ENCODE measurements at regions of chr19 and their contacts with region 1.

Region 1: GRCh38 chr19:48795055-48795684 is 15.7 kb downstream of the BCAT2 start:
- DNase-seq: peak; percentile 89 to 93 (median 93)
- H3K4me3 ChIP-seq: peak overlapping the region; percentile 58 to 92 (median 76)
- H3K27ac ChIP-seq: peak overlapping the region in 1 of 2 experiments; percentile 68
- H3K4me1 ChIP-seq: peaks cover 0 to 13% (median 3%) of the 10 kb centered on the region in 4 experiments
- H3K27me3 ChIP-seq: no peaks in the 10 kb centered on the region

Region 2: DNA sequence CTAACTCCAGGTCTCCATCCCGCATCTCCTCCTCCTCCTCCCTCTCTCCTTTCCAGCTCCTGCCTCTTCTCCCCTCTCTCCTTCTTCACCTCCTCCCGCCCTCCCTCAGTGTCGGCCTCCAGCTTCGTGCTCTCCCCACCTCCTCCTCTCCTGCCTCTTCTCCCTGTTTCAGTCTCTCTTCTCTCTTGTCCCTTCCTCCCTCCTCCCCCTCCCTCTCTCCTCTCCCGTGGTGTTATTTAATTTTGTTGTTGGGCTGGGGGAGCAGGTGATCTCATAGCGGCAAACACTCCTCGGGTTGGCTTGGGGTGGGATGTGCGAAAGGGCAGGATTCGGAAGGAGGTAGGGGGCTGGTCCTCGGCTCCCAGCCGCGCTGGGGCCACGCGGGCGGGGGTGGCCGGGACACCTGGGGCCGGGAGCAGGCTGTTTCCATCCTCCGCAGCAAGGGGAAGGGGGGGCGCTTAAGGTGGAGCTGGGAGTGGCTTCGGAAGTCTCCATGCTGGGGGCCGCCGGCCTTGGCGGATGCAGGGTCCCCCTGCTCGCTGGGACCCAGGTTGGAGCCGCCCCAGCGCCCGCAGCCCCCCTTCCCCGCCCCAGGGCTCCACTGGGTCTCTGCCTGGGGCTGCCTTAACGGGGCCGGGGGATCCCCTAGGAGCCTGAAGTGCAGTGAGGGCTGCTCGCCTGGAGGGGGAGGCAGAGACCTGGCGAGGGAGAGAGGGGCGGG is 149.0 kb before region 1 on chr19 and contains the start of gene CA11:
- CTCF ChIA-PET with region 1: interaction called, 12 read pairs
- POLR2A ChIA-PET with region 1: interaction called, 3 read pairs
- DNase-seq: peak; percentile 87 to 94 (median 94)
- H3K4me3 ChIP-seq: peak within 1 kb of the TSS; percentile 47 to 82 (median 59)
- H3K27ac ChIP-seq: peak within 1 kb of the TSS in 1 of 2 experiments; percentile 61
- H3K4me1 ChIP-seq: peaks cover 3 to 27% (median 22%) of the 10 kb centered on the region in 4 experiments
- H3K27me3 ChIP-seq: no peaks in the 10 kb centered on the region

Region 3: DNA sequence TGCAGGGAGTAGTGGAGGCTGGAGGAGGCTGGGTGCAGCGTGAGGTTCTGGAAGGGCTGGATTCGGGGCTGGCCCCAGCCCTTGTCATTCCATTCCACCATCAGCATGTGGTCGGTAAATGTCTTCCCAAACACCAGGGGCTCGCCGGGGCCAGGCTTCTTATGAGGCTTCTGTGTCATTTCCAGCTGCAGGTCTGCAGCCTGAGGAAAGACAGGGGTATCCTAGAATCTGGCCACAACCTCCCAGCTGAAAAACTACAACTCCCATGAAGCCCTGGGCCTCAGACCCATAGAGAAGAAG is 11.3 kb after region 1 on chr19:
- CTCF ChIA-PET with region 1: interaction called, 21 read pairs
- POLR2A ChIA-PET with region 1: no interaction called
- DNase-seq: peak in 1 of 3 donors; percentile 68
- H3K4me3 ChIP-seq: no peak overlapping the region
- H3K27ac ChIP-seq: no peak overlapping the region
- H3K4me1 ChIP-seq: peaks cover 0 to 13% (median 12%) of the 10 kb centered on the region in 4 experiments
- H3K27me3 ChIP-seq: no peaks in the 10 kb centered on the region

Region 4: DNA sequence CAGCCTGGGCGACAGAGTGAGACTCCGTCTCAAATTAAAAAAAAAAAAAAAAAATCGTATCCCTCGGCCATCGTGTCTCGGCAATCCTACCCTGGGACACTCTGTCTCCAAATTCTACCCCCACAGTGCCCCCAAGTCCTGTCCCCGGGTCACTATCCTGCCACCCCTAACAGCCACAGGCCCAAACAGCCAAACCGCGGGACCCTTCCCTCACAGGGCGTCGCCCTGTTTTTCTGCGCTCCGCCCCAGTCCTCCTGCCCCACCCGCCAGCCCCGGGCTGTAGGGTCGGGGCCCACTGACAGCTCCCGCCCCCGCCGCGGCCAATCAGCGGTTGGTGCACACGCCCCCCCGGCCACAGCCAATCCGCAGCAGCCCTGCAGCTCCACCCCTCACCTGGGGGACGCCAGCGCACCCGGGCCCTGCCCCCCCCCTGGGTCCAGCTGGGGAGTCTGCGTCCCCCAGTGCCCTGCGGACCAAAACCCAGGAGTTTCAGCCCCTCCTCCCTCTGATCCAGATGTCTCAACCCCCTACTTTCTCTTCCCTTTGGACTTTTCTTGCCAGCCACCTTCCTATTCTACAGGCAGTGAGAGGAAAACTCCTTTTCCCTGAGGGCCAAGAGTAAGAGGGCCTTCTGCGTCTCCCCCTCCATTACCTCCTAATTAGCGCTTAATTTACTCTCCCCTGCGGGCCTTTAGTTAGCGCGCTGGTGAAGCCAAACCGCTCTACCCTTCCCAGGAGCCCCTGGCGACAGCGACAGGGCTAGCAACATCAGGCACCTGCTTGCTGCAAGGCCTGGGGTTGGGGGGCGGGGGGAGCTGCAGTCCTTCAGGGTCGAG is 17.1 kb after region 1 on chr19:
- CTCF ChIA-PET with region 1: interaction called, 21 read pairs
- POLR2A ChIA-PET with region 1: no interaction called
- DNase-seq: peak; percentile 66 to 83 (median 71)
- H3K4me3 ChIP-seq: peak overlapping the region; percentile 29 to 83 (median 47)
- H3K27ac ChIP-seq: no peak overlapping the region
- H3K4me1 ChIP-seq: peaks cover 0 to 23% (median 18%) of the 10 kb centered on the region in 4 experiments
- H3K27me3 ChIP-seq: no peaks in the 10 kb centered on the region

Region 5: DNA sequence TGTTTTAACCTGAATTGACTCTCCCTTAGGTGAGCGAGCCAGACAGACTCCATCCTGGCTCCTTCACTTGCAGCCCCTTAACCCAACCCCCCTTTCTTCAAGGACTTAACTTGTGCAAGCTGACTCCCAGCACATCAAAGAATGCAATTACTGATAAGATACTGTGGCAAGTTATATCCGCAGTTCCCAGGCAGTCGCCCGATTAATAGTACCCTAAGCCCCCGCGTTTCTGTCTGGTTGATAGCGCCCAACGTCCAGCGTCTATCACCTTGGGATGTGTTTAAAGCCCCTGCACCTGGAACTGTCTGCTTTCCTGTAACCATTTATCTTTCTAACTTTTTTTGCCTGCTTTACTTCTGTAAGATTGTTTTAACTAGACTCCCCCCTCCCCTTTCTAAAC is 34.9 kb after region 1 on chr19:
- CTCF ChIA-PET with region 1: interaction called, 21 read pairs
- POLR2A ChIA-PET with region 1: interaction called, 4 read pairs
- DNase-seq: no peak
- H3K4me3 ChIP-seq: no peak overlapping the region
- H3K27ac ChIP-seq: no peak overlapping the region
- H3K4me1 ChIP-seq: no peaks in the 10 kb centered on the region
- H3K27me3 ChIP-seq: no peaks in the 10 kb centered on the region

Region 6: GRCh38 chr19:48835734-48836088 is 40.5 kb after region 1 on chr19:
- CTCF ChIA-PET with region 1: interaction called, 376 read pairs
- POLR2A ChIA-PET with region 1: interaction called, 4 read pairs
- DNase-seq: peak; percentile 90 to 95 (median 93)
- H3K4me3 ChIP-seq: peak overlapping the region; percentile 23 to 80 (median 60)
- H3K27ac ChIP-seq: peak overlapping the region in 1 of 2 experiments; percentile 74
- H3K4me1 ChIP-seq: peaks cover 0 to 25% (median 22%) of the 10 kb centered on the region in 4 experiments
- H3K27me3 ChIP-seq: no peaks in the 10 kb centered on the region

Region 7: DNA sequence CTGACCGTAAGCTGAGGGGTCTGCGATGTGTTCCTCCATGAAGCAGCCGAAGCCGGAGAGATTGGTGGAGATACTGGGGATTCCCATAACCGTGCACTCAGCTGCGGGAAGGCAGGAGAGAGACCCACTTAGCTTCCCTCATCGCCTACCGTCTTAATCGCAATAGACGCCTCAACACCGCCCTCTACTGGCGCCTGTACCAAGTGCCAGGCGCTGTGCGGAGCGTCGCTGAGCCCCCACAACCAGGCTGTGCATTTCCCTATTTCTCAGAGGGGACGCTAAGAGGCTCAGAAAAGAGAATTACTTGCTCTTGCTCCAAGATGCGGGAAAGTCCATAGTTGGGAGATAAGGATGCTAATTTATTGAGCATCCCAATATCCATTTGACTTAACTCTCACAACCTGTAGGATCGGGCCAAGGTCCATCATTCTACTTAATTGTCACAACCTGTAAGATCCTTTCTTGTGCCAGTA is 175.8 kb after region 1 on chr19:
- CTCF ChIA-PET with region 1: interaction called, 17 read pairs
- POLR2A ChIA-PET with region 1: interaction called, 3 read pairs
- DNase-seq: peak; percentile 87 to 94 (median 89)
- H3K4me3 ChIP-seq: no peak overlapping the region
- H3K27ac ChIP-seq: no peak overlapping the region
- H3K4me1 ChIP-seq: peaks cover 5 to 24% (median 16%) of the 10 kb centered on the region in 4 experiments
- H3K27me3 ChIP-seq: no peaks in the 10 kb centered on the region

Measured in common myeloid progenitor, CD34-positive (primary cell).